Activated naive CD4-positive, alpha-beta T cell treated with anti-CD3 and anti-CD28 coated beads, Interleukin-2, amount 10 ng/mL, durations not matched to agents 7 days and 5 days (primary cell): ENCODE measurements at regions of chr14 and their contacts with region 1.

Region 1: GRCh38 chr14:64421166-64421565 is 33.0 kb downstream of the MTHFD1 start:
- DNase-seq: no peak
- H3K4me3 Mint-ChIP-seq: no peak overlapping the region
- H3K27ac Mint-ChIP-seq: no peak overlapping the region
- H3K4me1 Mint-ChIP-seq: no peaks in the 10 kb centered on the region
- H3K27me3 Mint-ChIP-seq: no peaks in the 10 kb centered on the region

Region 2: DNA sequence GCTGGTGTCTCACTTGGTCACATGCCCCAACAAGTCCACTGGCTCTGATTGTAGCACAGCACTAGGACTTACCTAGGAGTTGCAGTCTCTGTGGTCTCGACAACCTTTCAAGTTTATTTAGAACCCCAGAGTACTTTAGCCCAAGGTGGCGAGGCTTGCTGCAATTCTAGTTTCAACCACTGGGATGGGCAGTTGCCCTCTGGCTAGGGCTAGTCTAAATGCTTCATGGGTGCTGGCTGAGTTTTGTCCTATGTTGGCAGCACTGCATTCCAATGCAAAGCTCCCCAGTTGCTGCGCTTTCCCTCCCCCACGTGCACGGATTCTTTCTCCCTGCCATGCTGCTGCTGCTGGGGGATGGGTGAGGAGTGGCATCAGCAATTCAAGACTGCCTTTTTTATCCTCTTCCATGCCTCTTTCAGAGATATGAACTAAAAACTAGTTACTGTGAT is 360.5 kb before region 1 on chr14:
- CTCF ChIA-PET with region 1: no interaction called
- DNase-seq: peak; percentile 25
- H3K4me3 Mint-ChIP-seq: no peak overlapping the region
- H3K27ac Mint-ChIP-seq: no peak overlapping the region
- H3K4me1 Mint-ChIP-seq: peaks cover 3% of the 10 kb centered on the region
- H3K27me3 Mint-ChIP-seq: no peaks in the 10 kb centered on the region

Region 3: GRCh38 chr14:64324895-64325294 is 96.3 kb before region 1 on chr14:
- CTCF ChIA-PET with region 1: no interaction called
- DNase-seq: no peak
- H3K4me3 Mint-ChIP-seq: no peak overlapping the region
- H3K27ac Mint-ChIP-seq: no peak overlapping the region
- H3K4me1 Mint-ChIP-seq: no peaks in the 10 kb centered on the region
- H3K27me3 Mint-ChIP-seq: peaks cover 30% of the 10 kb centered on the region

Region 4: GRCh38 chr14:64364907-64365306 is 56.3 kb before region 1 on chr14:
- CTCF ChIA-PET with region 1: no interaction called
- DNase-seq: no peak
- H3K4me3 Mint-ChIP-seq: no peak overlapping the region
- H3K27ac Mint-ChIP-seq: no peak overlapping the region
- H3K4me1 Mint-ChIP-seq: no peaks in the 10 kb centered on the region
- H3K27me3 Mint-ChIP-seq: peaks cover 5% of the 10 kb centered on the region

Region 5: GRCh38 chr14:64438181-64438841 is 17.1 kb after region 1 on chr14:
- CTCF ChIA-PET with region 1: interaction called, 41 read pairs
- DNase-seq: no peak
- H3K4me3 Mint-ChIP-seq: no peak overlapping the region
- H3K27ac Mint-ChIP-seq: no peak overlapping the region
- H3K4me1 Mint-ChIP-seq: peaks cover 10% of the 10 kb centered on the region
- H3K27me3 Mint-ChIP-seq: no peaks in the 10 kb centered on the region

Region 6: DNA sequence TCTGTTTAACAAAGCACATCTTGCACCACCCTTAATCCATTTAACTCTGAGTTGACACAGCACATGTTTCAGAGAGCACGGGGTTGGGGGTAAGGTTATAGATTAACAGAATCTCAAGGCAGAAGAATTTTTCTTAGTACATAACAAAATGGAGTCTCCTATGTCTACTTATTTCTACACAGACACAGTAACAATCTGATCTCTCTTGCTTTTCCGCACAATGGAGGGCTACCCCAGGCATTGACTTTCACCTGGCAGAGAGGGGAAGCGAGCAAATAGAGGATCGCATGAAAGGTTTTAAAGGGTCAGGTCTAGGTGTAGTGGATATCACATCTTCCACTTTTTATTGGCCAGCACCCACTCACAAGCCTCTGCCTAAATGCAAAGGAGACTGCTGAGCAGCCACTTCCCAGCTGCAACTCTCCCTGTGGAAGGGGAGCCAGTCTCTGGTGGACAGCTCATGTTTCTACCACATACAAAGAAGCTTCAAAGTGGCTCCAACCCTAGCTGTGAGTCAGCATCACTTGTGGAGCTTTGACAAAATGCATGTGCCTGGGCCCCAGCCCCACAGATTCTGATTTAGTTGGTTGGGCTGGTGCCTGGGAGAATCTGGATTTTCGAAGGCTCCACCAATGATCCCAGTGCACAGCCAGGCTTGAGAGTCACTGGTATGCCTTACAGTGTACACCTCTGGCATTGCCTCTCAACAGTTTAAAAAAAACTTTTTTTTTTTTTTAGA is 558.3 kb after region 1 on chr14:
- CTCF ChIA-PET with region 1: no interaction called
- DNase-seq: no peak
- H3K4me3 Mint-ChIP-seq: no peak overlapping the region
- H3K27ac Mint-ChIP-seq: no peak overlapping the region
- H3K4me1 Mint-ChIP-seq: peaks cover 13% of the 10 kb centered on the region
- H3K27me3 Mint-ChIP-seq: peaks cover 53% of the 10 kb centered on the region